Endothelial cell of umbilical vein (primary cell): ENCODE measurements at regions of chr4 and their contacts with region 1.

Region 1: GRCh38 chr4:100695039-100695654 is 177.3 kb upstream of the EMCN start:
- DNase-seq: peak; percentile 95
- H3K4me3 ChIP-seq: no peak overlapping the region
- H3K27ac ChIP-seq: no peak overlapping the region
- H3K4me1 ChIP-seq: peaks cover 26% of the 10 kb centered on the region
- H3K27me3 ChIP-seq: no peaks in the 10 kb centered on the region
- CTCF ChIP-seq: no peak
- POLR2A ChIP-seq: peak; percentile 67

Region 2: DNA sequence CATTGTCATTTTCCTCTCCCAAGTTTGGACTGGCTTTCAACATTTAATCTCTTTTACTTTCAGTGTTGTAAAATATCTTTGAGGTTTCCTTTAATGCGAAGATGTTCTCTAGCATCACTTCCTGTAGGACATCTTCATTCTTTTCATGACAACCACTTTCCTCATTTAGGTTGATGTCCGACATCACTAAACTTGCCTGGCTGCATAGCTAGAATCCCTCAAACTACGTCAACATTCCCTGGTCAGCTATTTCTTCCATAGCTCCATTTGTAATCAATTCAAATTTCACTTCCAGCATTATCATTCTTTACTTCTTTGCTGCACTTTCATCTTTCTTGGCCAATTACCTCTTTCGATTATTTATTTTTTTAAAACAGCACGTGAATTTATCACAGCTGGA is 21.3 kb after region 1 on chr4:
- CTCF ChIA-PET with region 1: no interaction called
- POLR2A ChIA-PET with region 1: no interaction called
- dilution Hi-C with region 1: no loop called
- intact Hi-C with region 1: loop called (anchors 2 kb)
- DNase-seq: no peak
- H3K4me3 ChIP-seq: no peak overlapping the region
- H3K27ac ChIP-seq: no peak overlapping the region
- H3K4me1 ChIP-seq: no peaks in the 10 kb centered on the region
- H3K27me3 ChIP-seq: no peaks in the 10 kb centered on the region
- CTCF ChIP-seq: no peak
- POLR2A ChIP-seq: no peak

Region 3: DNA sequence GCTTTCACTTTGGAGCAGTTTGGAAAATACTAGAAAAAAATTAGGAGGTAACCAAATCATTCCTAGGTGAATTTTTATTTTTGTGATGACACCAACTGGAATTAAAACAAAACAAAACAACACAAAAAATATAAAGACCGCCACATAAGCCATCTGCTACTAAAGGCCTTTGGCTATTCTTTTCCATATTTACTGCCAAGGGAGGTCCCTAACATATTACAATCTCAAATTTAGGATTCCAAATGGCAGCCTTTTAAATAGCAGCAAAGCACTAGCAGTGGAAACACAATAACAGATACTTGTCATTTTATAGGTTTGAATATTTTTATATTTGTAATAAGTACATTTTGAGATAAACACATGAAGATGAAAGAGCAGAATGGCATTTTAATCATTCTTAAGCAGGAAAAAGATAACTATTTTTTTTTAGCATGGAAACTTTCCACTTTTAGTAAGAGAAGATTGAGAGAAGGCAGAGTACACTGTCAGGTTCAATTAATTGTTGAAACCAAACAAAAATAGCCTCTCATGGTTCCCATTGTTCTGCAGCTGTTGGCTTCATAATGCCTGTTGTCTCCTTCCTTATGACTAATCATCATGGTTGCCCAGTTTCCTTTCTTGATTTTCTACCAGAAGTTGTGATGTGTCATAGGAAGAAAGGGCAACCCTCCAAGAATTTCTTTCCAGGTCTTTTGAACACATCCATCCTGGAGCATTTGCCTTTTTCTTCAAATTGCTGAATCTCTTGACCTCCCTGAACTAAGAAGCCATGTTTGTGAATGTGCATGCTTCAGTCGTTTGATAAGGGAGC is 41.7 kb after region 1 on chr4:
- CTCF ChIA-PET with region 1: no interaction called
- POLR2A ChIA-PET with region 1: no interaction called
- dilution Hi-C with region 1: no loop called
- intact Hi-C with region 1: loop called (anchors 1 kb)
- DNase-seq: peak; percentile 97
- H3K4me3 ChIP-seq: no peak overlapping the region
- H3K27ac ChIP-seq: peak overlapping the region; percentile 83
- H3K4me1 ChIP-seq: peaks cover 27% of the 10 kb centered on the region
- H3K27me3 ChIP-seq: no peaks in the 10 kb centered on the region
- CTCF ChIP-seq: no peak
- POLR2A ChIP-seq: peak; percentile 42

Region 4: DNA sequence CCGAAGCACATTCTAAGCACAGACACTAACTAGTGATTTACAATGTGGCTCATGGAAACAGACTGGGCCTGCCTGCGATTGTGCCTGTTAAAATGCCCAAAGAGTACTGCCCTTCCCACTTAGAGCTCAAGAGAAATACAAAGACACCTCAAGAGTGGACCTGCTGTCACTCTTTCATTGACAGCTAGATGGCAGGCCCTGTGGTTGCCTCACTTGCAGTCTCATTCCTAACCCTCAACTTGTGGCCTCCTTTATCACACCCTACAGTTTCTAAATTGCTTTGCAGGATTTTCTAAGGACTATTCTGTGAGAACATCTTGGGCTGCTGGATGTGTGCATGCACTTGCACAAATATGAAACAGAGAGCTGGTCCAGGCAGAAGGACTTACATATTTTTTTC is 153.7 kb after region 1 on chr4:
- CTCF ChIA-PET with region 1: no interaction called
- POLR2A ChIA-PET with region 1: no interaction called
- dilution Hi-C with region 1: no loop called
- intact Hi-C with region 1: no loop called
- DNase-seq: no peak
- H3K4me3 ChIP-seq: no peak overlapping the region
- H3K27ac ChIP-seq: no peak overlapping the region
- H3K4me1 ChIP-seq: no peaks in the 10 kb centered on the region
- H3K27me3 ChIP-seq: no peaks in the 10 kb centered on the region
- CTCF ChIP-seq: peak in 1 of 2 donors; percentile 19
- POLR2A ChIP-seq: no peak

Region 5: GRCh38 chr4:100926039-100926717 is 231.0 kb after region 1 on chr4:
- CTCF ChIA-PET with region 1: no interaction called
- POLR2A ChIA-PET with region 1: no interaction called
- dilution Hi-C with region 1: no loop called
- intact Hi-C with region 1: no loop called
- DNase-seq: no peak
- H3K4me3 ChIP-seq: no peak overlapping the region
- H3K27ac ChIP-seq: no peak overlapping the region
- H3K4me1 ChIP-seq: no peaks in the 10 kb centered on the region
- H3K27me3 ChIP-seq: no peaks in the 10 kb centered on the region
- CTCF ChIP-seq: no peak
- POLR2A ChIP-seq: no peak